ENCODE measurements at regions of chr1 and their contacts with region 1.

Region 1: DNA sequence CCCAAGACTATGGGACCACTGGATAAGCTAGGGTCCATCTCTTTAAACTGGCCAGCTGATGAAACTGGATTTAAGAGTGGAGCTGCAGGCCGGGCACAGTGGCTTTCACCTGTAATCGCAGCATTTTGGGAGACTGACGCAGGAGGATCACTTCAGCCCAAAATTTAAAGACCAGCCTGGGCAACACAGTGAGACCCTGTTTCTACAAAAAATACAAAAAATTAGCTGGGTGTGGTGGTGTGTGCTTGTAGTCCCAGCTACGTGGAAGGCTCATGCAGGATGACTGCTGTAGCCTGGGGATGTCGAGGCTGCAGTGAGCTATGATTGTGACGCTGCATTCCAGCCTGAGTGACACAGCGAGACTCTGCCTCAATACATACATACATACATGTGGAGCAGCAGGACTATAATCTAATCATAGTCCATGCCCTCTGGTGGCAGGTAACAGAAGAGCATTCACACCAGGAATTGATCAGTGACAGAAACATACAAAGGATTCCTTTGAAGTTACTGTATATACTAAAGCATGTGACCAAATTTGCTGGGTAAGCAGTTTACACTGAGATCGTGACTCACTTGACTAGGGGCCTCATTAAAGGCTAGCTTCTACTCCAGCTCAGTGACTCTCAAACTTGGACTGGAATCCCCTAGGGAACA is 101.5 kb upstream of the SLFNL1 start:
- DNase-seq: peak; percentile 72
- H3K4me3 ChIP-seq: no peak overlapping the region
- H3K27ac ChIP-seq: no peak overlapping the region
- H3K27me3 ChIP-seq: no peaks in the 10 kb centered on the region
- CTCF ChIP-seq: peak; percentile 70

Region 2: DNA sequence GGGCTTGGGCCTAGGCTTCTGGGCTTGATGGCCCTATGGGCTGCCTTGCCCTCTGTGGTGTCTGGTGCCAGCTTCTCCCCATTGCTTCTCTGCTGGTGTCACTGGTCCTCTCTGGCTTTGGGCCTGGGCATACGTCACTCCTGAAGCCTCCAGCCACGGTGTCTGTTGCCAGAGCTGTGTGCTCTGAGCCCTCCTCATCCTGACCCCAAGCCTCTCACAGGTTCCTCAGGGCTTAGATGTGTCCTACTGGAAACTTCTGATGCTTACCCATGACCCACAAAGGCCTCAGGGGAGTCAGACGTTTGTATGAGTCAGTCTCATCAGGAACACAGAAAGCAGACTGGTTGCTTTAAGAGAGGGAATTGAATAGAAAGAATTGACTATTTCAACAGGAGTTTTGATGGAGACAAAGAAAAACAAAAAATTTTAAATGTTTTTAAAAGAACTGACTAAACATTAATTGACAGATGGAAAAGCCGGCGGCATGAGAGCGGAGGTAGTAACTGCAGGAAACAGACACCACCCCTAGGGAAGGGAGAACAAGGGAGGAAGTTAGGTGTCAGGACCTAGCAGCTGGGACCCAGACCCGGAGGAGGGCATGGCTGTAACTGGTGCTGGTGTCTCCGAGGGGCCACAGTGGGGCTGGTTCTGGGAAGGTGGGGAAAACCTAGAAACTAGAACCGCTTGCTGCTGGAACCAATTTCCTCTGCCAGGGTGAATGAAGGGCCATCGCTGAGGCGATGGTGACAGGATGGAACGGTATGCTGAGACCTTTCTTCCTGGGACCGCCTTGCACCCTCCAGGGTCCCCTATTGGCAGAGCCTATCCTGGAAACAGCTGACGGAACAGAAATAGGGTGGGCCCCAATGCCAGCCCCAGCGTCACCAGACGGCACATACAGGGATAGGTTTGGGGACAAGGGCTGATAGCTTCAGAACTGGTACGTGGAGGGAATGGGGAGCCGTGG is 220.8 kb before region 1 on chr1:
- CTCF ChIA-PET with region 1: no interaction called
- POLR2A ChIA-PET with region 1: no interaction called
- DNase-seq: no peak
- H3K4me3 ChIP-seq: no peak overlapping the region
- H3K27ac ChIP-seq: no peak overlapping the region
- H3K27me3 ChIP-seq: no peaks in the 10 kb centered on the region
- CTCF ChIP-seq: no peak

Region 3: DNA sequence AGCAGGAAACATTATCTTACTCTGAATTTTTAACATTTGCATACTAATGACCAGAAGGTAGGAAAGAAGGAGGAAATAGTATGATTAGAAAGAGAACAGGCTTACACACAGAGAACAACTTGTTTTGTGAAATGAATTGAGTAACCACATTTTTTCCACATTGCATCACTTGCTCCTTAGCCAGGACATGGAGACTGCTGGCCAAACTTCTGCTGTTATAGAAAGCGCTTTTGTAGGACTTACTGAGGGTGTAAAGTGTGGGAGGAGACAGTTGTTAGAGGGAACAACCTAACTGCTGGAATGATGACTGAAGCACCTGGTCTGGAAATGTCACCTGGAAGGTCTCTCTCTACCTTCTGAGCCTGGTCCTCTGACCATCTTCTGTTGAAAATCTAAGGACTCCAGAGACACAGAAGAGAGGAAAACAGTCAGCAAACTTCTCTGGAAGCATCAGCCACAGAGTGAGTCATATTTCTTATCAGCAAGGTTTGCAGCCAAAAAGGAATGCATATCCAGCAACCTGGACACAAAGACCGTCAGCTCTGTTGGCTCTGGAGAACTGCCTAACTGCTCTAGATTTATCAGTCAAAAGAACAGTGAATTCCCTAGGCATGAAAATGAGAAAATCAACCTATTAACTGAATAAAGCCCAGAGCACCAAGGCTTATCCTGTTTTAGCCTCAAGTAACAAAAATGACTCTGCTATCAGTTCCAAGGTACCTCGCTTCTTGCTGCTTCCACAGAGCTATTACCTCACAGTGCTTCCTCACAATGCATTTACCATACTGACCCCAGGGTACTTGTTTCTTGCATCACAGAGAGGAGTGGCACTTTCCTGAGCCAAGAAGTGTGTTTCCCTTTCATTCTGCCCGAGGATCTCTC is 13.4 kb before region 1 on chr1:
- CTCF ChIA-PET with region 1: interaction called, 20 read pairs
- POLR2A ChIA-PET with region 1: interaction called, 4 read pairs
- DNase-seq: peak; percentile 73
- H3K4me3 ChIP-seq: peak overlapping the region; percentile 35
- H3K27ac ChIP-seq: peak overlapping the region; percentile 96
- H3K27me3 ChIP-seq: no peaks in the 10 kb centered on the region
- CTCF ChIP-seq: no peak

Region 4: DNA sequence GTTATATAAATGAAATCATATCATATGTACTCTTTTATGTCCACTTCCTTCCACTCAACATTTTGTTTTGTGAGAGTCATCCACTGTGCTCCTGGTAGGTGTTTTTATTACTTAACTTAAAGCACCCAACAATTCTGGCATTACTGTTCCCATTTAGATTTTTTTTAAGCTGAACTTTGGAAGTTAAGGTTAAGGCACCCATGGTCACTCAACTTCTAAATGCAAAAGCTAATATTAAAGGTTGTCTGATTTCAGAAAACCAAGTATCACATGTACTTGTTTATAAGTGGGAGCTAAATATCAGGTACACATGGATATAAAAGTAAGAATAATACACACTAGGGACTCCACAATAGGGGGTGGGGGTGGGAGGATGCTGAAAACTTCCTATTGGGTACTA is 76.4 kb after region 1 on chr1:
- CTCF ChIA-PET with region 1: no interaction called
- POLR2A ChIA-PET with region 1: no interaction called
- DNase-seq: no peak
- H3K4me3 ChIP-seq: no peak overlapping the region
- H3K27ac ChIP-seq: no peak overlapping the region
- H3K27me3 ChIP-seq: no peaks in the 10 kb centered on the region
- CTCF ChIP-seq: no peak

Region 5: GRCh38 chr1:41246568-41246967 is 123.6 kb after region 1 on chr1:
- CTCF ChIA-PET with region 1: no interaction called
- POLR2A ChIA-PET with region 1: no interaction called
- DNase-seq: no peak
- H3K4me3 ChIP-seq: no peak overlapping the region
- H3K27ac ChIP-seq: no peak overlapping the region
- H3K27me3 ChIP-seq: no peaks in the 10 kb centered on the region
- CTCF ChIP-seq: no peak

Measured in AG04450 (cell line).